ENCODE measurements at regions of chr3 and their contacts with region 1.

Region 1: GRCh38 chr3:45656575-45657363 is 32.4 kb upstream of the SACM1L start:
- DNase-seq: peak; percentile 88
- ATAC-seq: peak; percentile 89
- H3K4me3 ChIP-seq: no peak overlapping the region
- H3K4me3 Mint-ChIP-seq: no peak overlapping the region
- H3K27ac ChIP-seq: no peak overlapping the region
- H3K27ac Mint-ChIP-seq: peak overlapping the region; percentile 53
- H3K4me1 ChIP-seq: peaks cover 20 to 21% of the 10 kb centered on the region in 2 donors
- H3K4me1 Mint-ChIP-seq: peaks cover 49% of the 10 kb centered on the region
- H3K27me3 ChIP-seq: no peaks in the 10 kb centered on the region
- H3K27me3 Mint-ChIP-seq: no peaks in the 10 kb centered on the region
- CTCF ChIP-seq: peak; percentile 91

Region 2: GRCh38 chr3:45516829-45517228 is 139.9 kb before region 1 on chr3:
- CTCF ChIA-PET with region 1: interaction called, 247 read pairs
- POLR2A ChIA-PET with region 1: no interaction called
- intact Hi-C with region 1: no loop called
- DNase-seq: no peak
- ATAC-seq: no peak
- H3K4me3 ChIP-seq: no peak overlapping the region
- H3K4me3 Mint-ChIP-seq: no peak overlapping the region
- H3K27ac ChIP-seq: no peak overlapping the region
- H3K27ac Mint-ChIP-seq: no peak overlapping the region
- H3K4me1 ChIP-seq: no peaks in the 10 kb centered on the region
- H3K4me1 Mint-ChIP-seq: no peaks in the 10 kb centered on the region
- H3K27me3 ChIP-seq: no peaks in the 10 kb centered on the region
- H3K27me3 Mint-ChIP-seq: no peaks in the 10 kb centered on the region
- CTCF ChIP-seq: no peak

Region 3: DNA sequence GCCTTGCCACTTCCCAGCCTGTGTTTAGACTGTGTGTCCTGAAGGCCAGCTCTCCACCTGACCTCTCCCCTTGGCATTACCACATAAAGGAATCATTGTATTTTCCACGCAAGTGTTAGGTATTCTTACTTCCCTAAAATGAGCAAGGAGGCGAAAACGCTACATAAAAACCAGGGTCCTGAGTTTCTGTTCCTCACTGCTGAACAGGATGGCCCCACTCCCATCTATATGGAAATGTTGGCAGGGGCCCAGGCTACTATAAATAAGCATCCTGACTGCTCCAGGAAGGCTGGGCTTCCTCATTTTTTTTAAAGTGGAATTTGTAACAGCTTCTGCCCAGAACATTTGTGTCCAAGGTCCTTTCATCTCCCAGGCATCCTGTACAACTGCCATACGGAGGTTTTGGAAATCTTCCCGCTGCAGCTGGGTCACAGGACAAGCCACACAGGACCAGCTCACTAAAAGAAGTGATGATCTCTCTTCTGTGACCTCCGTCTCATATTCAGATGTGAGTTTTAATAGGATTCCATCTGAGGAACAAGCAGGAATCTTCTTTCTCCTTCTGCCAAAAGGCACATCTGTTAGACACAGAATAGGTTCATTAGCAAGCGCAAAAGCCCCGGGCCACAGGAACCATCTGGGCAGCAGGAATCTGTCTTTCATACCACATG is 118.7 kb before region 1 on chr3:
- CTCF ChIA-PET with region 1: interaction called, 24 read pairs
- POLR2A ChIA-PET with region 1: no interaction called
- intact Hi-C with region 1: no loop called
- DNase-seq: no peak
- ATAC-seq: no peak
- H3K4me3 ChIP-seq: no peak overlapping the region
- H3K4me3 Mint-ChIP-seq: no peak overlapping the region
- H3K27ac ChIP-seq: no peak overlapping the region
- H3K27ac Mint-ChIP-seq: no peak overlapping the region
- H3K4me1 ChIP-seq: peaks cover 0 to 9% of the 10 kb centered on the region in 2 donors
- H3K4me1 Mint-ChIP-seq: peaks cover 9% of the 10 kb centered on the region
- H3K27me3 ChIP-seq: no peaks in the 10 kb centered on the region
- H3K27me3 Mint-ChIP-seq: no peaks in the 10 kb centered on the region
- CTCF ChIP-seq: no peak

Region 4: GRCh38 chr3:45567730-45568172 is 89.0 kb before region 1 on chr3:
- CTCF ChIA-PET with region 1: interaction called, 14 read pairs
- POLR2A ChIA-PET with region 1: no interaction called
- intact Hi-C with region 1: no loop called
- DNase-seq: peak; percentile 78
- ATAC-seq: peak; percentile 75
- H3K4me3 ChIP-seq: no peak overlapping the region
- H3K4me3 Mint-ChIP-seq: peak overlapping the region; percentile 71
- H3K27ac ChIP-seq: peak overlapping the region; percentile 49 to 69
- H3K27ac Mint-ChIP-seq: peak overlapping the region; percentile 84
- H3K4me1 ChIP-seq: peaks cover 50 to 58% of the 10 kb centered on the region in 2 donors
- H3K4me1 Mint-ChIP-seq: peaks cover 54% of the 10 kb centered on the region
- H3K27me3 ChIP-seq: no peaks in the 10 kb centered on the region
- H3K27me3 Mint-ChIP-seq: no peaks in the 10 kb centered on the region
- CTCF ChIP-seq: no peak

Region 5: DNA sequence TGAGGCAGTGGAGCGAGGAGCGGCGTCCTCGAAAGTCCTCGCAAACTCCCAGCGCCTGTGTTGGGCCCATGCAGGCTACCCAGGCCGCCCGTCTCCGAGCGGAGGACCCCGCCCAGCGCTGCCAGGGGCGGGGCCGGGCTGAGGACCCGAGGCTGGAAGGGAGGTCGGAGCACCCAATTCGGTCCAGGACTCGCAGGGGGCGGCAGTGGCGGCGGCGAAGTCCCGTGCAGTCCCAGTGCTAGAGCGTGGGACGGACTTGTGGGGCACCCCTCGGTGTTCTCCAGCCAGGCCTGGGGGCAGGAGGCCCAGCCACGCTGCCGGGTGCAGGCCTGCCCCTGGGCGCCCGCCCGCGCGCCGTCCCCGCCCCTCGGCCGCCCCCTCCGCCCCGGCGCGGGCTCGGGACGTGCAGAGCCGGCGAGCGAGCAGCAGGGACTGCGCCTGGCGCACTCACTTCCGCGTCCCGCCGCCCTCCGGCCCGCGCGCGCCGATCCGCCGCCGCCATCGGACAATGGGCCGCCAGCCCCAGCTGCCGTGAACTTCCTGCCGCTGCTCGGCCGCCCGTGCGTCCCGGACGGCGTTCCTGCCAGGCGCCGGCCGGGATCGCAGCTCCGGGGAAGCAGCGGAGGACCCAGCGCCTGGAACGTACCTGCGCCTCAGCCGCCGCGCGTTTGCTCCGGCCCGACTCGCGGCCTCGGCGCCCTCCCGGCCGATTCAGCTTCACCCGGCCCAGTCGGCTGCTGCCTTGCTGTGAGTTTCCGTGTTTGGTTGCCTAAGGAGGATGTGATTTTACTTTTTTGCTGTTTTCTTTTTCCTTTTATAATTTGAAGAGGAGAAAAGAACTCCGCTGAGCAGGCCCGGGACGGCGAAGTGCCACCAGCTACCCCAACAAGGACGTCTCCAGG is 62.8 kb before region 1 on chr3:
- CTCF ChIA-PET with region 1: interaction called, 75 read pairs
- POLR2A ChIA-PET with region 1: interaction called, 7 read pairs
- intact Hi-C with region 1: loop called (anchors 1 kb)
- DNase-seq: peak; percentile 84
- ATAC-seq: peak; percentile 66
- H3K4me3 ChIP-seq: peak overlapping the region; percentile 57 to 90 (median 81)
- H3K4me3 Mint-ChIP-seq: peak overlapping the region; percentile 90
- H3K27ac ChIP-seq: peak overlapping the region; percentile 76 to 82
- H3K27ac Mint-ChIP-seq: peak overlapping the region; percentile 91
- H3K4me1 ChIP-seq: peaks cover 38 to 58% of the 10 kb centered on the region in 2 donors
- H3K4me1 Mint-ChIP-seq: peaks cover 56% of the 10 kb centered on the region
- H3K27me3 ChIP-seq: no peaks in the 10 kb centered on the region
- H3K27me3 Mint-ChIP-seq: no peaks in the 10 kb centered on the region
- CTCF ChIP-seq: no peak

Region 6: DNA sequence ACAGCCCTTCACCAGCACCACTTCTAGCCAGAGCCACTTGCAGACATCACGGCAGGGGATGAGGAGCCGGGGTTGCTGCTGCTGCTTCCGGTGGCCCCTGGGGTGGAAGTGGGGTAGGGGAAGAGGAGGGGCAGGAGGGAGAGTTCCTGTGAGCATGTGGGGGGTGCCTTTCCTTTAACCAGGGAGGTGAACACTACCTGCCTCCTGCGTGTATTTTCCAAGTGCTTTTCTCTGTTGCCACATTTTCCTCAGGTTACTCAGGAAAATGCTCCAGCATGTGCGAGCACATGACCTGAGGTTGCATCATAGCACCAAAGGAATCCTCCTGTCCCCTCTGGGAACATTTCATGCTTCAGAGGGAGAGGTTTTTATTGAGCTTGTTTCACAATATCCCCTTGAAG is 20.3 kb after region 1 on chr3:
- CTCF ChIA-PET with region 1: interaction called, 10 read pairs
- POLR2A ChIA-PET with region 1: no interaction called
- intact Hi-C with region 1: no loop called
- DNase-seq: no peak
- ATAC-seq: peak; percentile 49
- H3K4me3 ChIP-seq: no peak overlapping the region
- H3K4me3 Mint-ChIP-seq: peak overlapping the region; percentile 7
- H3K27ac ChIP-seq: peak overlapping the region in 1 of 2 donors; percentile 56
- H3K27ac Mint-ChIP-seq: peak overlapping the region; percentile 85
- H3K4me1 ChIP-seq: peaks cover 9 to 21% of the 10 kb centered on the region in 2 donors
- H3K4me1 Mint-ChIP-seq: peaks cover 24% of the 10 kb centered on the region
- H3K27me3 ChIP-seq: no peaks in the 10 kb centered on the region
- H3K27me3 Mint-ChIP-seq: no peaks in the 10 kb centered on the region
- CTCF ChIP-seq: no peak

Region 7: GRCh38 chr3:46019707-46020106 is 362.9 kb after region 1 on chr3:
- CTCF ChIA-PET with region 1: no interaction called
- POLR2A ChIA-PET with region 1: no interaction called
- intact Hi-C with region 1: no loop called
- DNase-seq: no peak
- ATAC-seq: no peak
- H3K4me3 ChIP-seq: no peak overlapping the region
- H3K4me3 Mint-ChIP-seq: no peak overlapping the region
- H3K27ac ChIP-seq: no peak overlapping the region
- H3K27ac Mint-ChIP-seq: no peak overlapping the region
- H3K4me1 ChIP-seq: no peaks in the 10 kb centered on the region
- H3K4me1 Mint-ChIP-seq: no peaks in the 10 kb centered on the region
- H3K27me3 ChIP-seq: peaks cover 0 to 5% (median 0%) of the 10 kb centered on the region in 4 experiments
- H3K27me3 Mint-ChIP-seq: peaks cover 19% of the 10 kb centered on the region
- CTCF ChIP-seq: no peak

Measured in B cell (primary cell).